Spleen (tissue), 13 donors: ENCODE measurements at regions of chr17 and their contacts with region 1.

Region 1: GRCh38 chr17:4087906-4088693 is 54.7 kb downstream of the ZZEF1 start:
- DNase-seq: no peak
- H3K4me3 ChIP-seq: no peak overlapping the region
- H3K27ac ChIP-seq: no peak overlapping the region
- H3K4me1 ChIP-seq: peaks cover 0 to 16% (median 2%) of the 10 kb centered on the region in 6 donors
- H3K27me3 ChIP-seq: no peaks in the 10 kb centered on the region
- CTCF ChIP-seq: no peak
- POLR2A ChIP-seq: no peak

Region 2: GRCh38 chr17:4023220-4023619 is 64.9 kb before region 1 on chr17:
- intact Hi-C with region 1: loop called (anchors 10 kb)
- DNase-seq: no peak
- H3K4me3 ChIP-seq: no peak overlapping the region
- H3K27ac ChIP-seq: no peak overlapping the region
- H3K4me1 ChIP-seq: no peaks in the 10 kb centered on the region
- H3K27me3 ChIP-seq: no peaks in the 10 kb centered on the region
- CTCF ChIP-seq: no peak
- POLR2A ChIP-seq: no peak